Activated CD4-positive, alpha-beta memory T cell treated with anti-CD3 and anti-CD28 coated beads for 36 hours (primary cell): ENCODE measurements at regions of chr5 and their contacts with region 1.

Region 1: DNA sequence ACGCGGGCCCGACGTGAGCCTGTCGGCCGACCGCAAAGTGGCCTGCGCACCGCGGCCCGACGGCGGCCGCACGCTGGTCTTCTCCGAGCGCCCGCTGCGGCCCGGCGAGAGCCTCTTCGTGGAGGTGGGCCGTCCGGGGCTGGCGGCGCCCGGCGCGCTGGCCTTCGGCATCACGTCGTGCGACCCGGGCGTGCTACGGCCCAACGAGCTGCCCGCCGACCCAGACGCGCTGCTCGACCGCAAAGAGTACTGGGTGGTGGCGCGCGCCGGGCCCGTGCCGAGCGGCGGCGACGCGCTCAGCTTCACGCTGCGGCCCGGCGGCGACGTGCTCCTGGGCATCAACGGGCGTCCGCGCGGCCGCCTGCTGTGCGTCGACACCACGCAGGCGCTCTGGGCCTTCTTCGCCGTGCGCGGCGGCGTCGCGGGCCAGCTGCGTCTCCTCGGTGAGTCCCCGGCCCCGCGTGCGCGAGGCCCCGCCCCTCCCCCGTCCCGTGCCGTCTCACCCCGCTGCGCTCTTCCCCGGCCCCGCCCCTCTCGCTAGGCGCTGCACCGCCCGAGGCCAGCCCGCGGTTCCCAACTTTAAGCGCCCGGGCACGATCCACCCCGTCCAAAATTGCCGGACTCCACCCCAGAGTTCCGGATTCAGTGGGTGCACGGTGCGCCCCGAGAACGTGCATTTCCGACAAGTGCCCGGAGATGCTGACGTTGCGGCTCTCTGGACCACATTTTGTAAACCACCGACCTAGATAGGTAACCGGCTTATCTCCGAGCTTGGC is 42.8 kb downstream of the NEURL1B start:
- DNase-seq: peak; percentile 70
- H3K4me3 Mint-ChIP-seq: peak overlapping the region; percentile 62
- H3K27ac Mint-ChIP-seq: no peak overlapping the region
- H3K4me1 Mint-ChIP-seq: peaks cover 13% of the 10 kb centered on the region
- H3K27me3 Mint-ChIP-seq: peaks cover 3% of the 10 kb centered on the region

Region 2: DNA sequence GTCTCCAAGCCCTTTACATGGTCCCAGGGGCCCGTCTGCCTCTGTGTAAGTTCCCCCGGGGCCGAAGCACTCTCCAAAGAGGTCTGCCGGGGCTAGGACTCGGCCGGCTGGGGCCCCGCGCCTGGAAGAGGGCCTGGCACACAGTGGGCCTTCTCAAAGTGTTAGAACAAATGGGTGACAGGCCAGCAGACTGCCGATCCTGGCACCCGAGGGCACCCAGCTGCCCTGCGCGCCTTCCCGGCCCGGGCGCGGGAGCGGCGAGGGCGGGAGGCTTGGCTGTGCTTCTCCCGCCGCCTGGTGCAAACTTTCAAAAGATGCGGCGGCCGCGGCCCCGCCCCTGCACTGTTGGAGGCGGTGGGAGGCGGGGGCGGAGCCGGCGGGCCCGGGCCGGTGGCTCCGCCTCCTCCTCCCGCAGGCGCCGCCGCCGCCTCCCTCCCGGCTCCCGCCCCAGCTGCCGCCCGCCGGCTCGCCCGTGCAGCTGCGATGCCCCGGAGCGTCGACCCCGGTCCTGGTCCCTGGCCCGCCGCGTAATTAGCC is 43.0 kb before region 1 on chr5 and contains the start of gene NEURL1B:
- CTCF ChIA-PET with region 1: no interaction called
- POLR2A ChIA-PET with region 1: no interaction called
- intact Hi-C with region 1: loop called (anchors 2 kb)
- DNase-seq: peak; percentile 62
- H3K4me3 Mint-ChIP-seq: peak within 1 kb of the TSS; percentile 44
- H3K27ac Mint-ChIP-seq: no peak within 1 kb of the TSS
- H3K4me1 Mint-ChIP-seq: no peaks in the 10 kb centered on the region
- H3K27me3 Mint-ChIP-seq: peaks cover 34% of the 10 kb centered on the region
- total RNA-seq, gene NEURL1B: 0.29 to 0.38 TPM

Region 3: GRCh38 chr5:173094012-173094661 is 410.3 kb after region 1 on chr5:
- CTCF ChIA-PET with region 1: no interaction called
- POLR2A ChIA-PET with region 1: no interaction called
- intact Hi-C with region 1: no loop called
- DNase-seq: no peak
- H3K4me3 Mint-ChIP-seq: no peak overlapping the region
- H3K27ac Mint-ChIP-seq: peak overlapping the region; percentile 57
- H3K4me1 Mint-ChIP-seq: peaks cover 53% of the 10 kb centered on the region
- H3K27me3 Mint-ChIP-seq: no peaks in the 10 kb centered on the region

Region 4: GRCh38 chr5:173198049-173198448 is 514.2 kb after region 1 on chr5:
- CTCF ChIA-PET with region 1: no interaction called
- POLR2A ChIA-PET with region 1: no interaction called
- intact Hi-C with region 1: no loop called
- DNase-seq: no peak
- H3K4me3 Mint-ChIP-seq: no peak overlapping the region
- H3K27ac Mint-ChIP-seq: no peak overlapping the region
- H3K4me1 Mint-ChIP-seq: no peaks in the 10 kb centered on the region
- H3K27me3 Mint-ChIP-seq: peaks cover 13% of the 10 kb centered on the region